ENCODE measurements at regions of chr15 and their contacts with region 1.

Region 1: DNA sequence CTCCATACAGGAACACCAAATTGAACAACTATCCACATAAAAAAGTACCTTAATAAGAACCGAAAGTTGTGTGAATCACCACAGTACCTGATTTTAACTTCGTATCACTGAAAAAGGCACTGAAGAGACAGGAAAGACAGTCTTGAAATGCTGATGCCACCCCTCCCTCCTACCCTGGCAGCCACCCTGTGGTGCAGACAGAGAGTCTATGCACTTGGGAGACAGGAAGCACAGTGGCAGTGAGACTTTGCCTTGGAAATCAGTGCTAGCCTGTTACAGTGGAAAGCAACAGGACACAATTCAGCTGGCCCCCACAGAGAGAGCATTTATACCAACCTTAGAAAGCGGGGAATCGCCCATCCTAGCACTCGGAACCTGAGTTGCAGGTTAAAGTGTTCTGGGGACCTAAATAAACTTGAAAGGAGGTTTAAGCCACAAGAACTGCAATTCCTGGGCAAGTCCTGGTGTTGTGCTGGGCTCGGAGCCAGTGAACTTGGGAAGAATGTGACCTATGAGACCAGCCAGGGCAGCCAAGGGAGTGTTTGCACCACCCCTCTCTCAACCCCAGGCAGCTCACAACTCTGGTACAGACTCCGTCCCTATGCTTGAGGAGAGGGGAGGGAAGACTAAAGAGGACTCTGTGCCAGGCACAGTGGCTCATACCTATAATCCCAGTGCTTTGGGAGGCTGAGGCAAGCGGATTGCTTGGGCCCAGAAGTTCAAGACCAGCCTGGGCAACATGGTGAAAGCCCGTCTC is 240.1 kb downstream of the ISL2 start:
- DNase-seq: no peak
- ATAC-seq: peak; percentile 50
- H3K4me3 Mint-ChIP-seq: peak overlapping the region; percentile 26
- H3K27ac Mint-ChIP-seq: peak overlapping the region; percentile 89
- H3K4me1 Mint-ChIP-seq: peaks cover 36% of the 10 kb centered on the region
- H3K27me3 Mint-ChIP-seq: no peaks in the 10 kb centered on the region
- CTCF ChIP-seq: no peak

Region 2: DNA sequence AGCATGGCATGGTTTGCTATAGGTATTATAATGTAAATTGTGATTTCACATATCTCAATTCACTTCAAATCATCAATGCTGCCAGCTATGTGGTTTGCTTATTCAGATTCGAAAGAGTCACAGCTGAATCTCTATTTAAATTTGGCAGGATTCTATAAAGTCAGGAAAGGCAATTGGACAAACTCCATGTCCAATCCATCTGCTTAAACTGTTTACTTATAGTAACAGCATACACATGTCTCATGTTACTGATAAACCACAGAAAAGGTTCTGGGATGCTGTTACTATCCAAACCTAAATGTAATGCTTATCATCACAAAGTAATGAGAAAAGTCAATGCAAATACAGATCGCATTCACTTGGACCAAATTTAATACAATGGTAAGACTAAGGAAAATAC is 10.4 kb before region 1 on chr15:
- CTCF ChIA-PET with region 1: no interaction called
- POLR2A ChIA-PET with region 1: interaction called, 7 read pairs
- intact Hi-C with region 1: loop called (anchors 1 kb)
- DNase-seq: no peak
- ATAC-seq: no peak
- H3K4me3 Mint-ChIP-seq: no peak overlapping the region
- H3K27ac Mint-ChIP-seq: no peak overlapping the region
- H3K4me1 Mint-ChIP-seq: peaks cover 16% of the 10 kb centered on the region
- H3K27me3 Mint-ChIP-seq: no peaks in the 10 kb centered on the region
- CTCF ChIP-seq: no peak

Measured in activated B cell treated with CpG ODN at 0.5 μM for 24 hours (primary cell).